PC-3 (cell line): ENCODE measurements at regions of chr13 and their contacts with region 1.

Region 1: DNA sequence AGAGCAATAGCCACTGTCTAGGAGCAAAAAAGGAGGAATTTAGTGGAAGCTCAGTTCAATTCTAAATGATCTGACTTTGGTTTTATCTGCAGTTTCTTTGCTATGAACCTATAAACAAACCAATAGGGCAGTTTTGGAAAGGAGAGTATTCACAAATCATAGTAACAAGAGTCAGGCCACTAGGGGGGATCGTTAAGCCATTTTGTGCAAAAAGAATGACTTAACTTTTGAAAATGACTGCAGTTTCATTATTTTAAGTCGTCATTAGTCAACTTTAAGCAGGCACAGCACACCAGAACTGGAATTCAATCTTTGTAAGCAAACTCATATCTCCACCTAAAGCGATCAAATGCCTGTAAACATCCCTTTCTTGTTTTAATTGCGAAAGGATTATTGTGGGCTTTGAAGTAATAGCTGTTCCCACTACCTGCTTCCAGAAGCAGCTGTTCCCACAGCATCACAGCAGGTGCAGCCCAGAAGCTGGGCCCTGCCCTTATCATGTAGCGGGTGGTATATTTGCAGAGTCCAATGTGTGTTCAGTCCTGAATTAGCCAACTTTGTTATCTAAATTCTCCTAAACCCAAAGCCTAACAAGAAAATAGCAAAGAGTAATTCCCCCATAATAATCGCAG is 51.5 kb downstream of the SOX21 start:
- DNase-seq: peak; percentile 51
- ATAC-seq: no peak
- H3K4me3 ChIP-seq: no peak overlapping the region
- H3K27ac ChIP-seq: no peak overlapping the region
- H3K4me1 ChIP-seq: peaks cover 34% of the 10 kb centered on the region
- H3K27me3 ChIP-seq: no peaks in the 10 kb centered on the region
- CTCF ChIP-seq: peak; percentile 65

Region 2: DNA sequence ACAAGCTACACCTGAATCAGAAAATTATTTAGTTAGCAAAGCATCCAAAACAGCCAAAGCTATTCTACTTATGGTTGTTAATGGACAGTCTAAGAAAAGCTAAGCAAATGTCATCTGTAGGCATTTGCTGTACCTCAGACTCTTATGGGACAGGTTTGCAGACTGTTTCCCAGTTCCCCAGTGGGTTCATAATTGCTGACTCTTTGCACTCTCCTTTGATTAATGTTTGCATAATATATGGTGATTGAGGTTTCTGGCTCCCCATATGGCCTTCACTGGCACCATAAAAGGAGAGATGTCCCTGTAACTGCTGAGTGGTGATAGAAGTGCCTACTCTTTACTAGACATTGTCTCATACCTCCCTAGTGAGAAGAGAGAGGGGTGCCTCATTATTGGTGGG is 1292.1 kb before region 1 on chr13:
- CTCF ChIA-PET with region 1: no interaction called
- POLR2A ChIA-PET with region 1: interaction called, 14 read pairs
- intact Hi-C with region 1: no loop called
- DNase-seq: no peak
- ATAC-seq: no peak
- H3K4me3 ChIP-seq: no peak overlapping the region
- H3K27ac ChIP-seq: no peak overlapping the region
- H3K4me1 ChIP-seq: no peaks in the 10 kb centered on the region
- H3K27me3 ChIP-seq: no peaks in the 10 kb centered on the region
- CTCF ChIP-seq: no peak

Region 3: DNA sequence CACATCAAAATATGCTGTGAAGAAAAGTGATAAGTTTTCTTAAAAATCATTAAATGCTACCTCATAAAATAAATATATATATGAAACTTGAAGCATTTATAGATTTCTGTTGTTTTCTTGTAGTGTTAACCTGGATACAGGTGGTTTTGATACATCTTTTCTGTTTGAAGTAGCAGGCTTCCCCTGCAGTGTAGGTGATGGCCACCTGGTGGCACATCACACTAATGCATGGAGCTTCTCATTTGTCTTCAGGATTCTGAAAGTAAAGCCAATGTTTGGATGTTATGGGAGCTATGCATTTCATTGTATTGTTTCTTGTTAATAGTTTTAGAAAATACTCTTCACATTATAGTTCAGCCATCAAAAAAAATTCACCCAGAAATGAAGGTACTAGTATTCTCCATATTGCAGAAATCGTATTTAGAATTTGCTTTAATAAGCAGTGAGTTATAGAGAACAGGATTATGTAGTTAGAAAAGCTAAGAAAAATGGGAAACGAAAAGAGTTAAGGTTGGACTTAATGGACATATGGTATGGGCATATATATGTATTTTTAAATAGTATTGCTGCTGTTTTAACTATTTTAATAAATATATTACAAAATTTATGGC is 40.4 kb before region 1 on chr13:
- CTCF ChIA-PET with region 1: interaction called, 4 read pairs
- POLR2A ChIA-PET with region 1: no interaction called
- intact Hi-C with region 1: loop called (anchors 1 kb)
- DNase-seq: peak; percentile 61
- ATAC-seq: peak; percentile 67
- H3K4me3 ChIP-seq: no peak overlapping the region
- H3K27ac ChIP-seq: no peak overlapping the region
- H3K4me1 ChIP-seq: no peaks in the 10 kb centered on the region
- H3K27me3 ChIP-seq: no peaks in the 10 kb centered on the region
- CTCF ChIP-seq: peak; percentile 83

Region 4: GRCh38 chr13:94641409-94641941 is 19.3 kb before region 1 on chr13:
- CTCF ChIA-PET with region 1: no interaction called
- POLR2A ChIA-PET with region 1: no interaction called
- intact Hi-C with region 1: loop called (anchors 1 kb)
- DNase-seq: peak; percentile 62
- ATAC-seq: peak; percentile 99
- H3K4me3 ChIP-seq: peak overlapping the region; percentile 14; the same call in 1 of the 2 replicates
- H3K27ac ChIP-seq: peak overlapping the region; percentile 64
- H3K4me1 ChIP-seq: peaks cover 20% of the 10 kb centered on the region
- H3K27me3 ChIP-seq: no peaks in the 10 kb centered on the region
- CTCF ChIP-seq: no peak

Region 5: GRCh38 chr13:94677799-94678198 is 17.0 kb after region 1 on chr13:
- CTCF ChIA-PET with region 1: no interaction called
- POLR2A ChIA-PET with region 1: no interaction called
- intact Hi-C with region 1: no loop called
- DNase-seq: no peak
- ATAC-seq: no peak
- H3K4me3 ChIP-seq: no peak overlapping the region
- H3K27ac ChIP-seq: no peak overlapping the region
- H3K4me1 ChIP-seq: peaks cover 10% of the 10 kb centered on the region
- H3K27me3 ChIP-seq: no peaks in the 10 kb centered on the region
- CTCF ChIP-seq: no peak

Region 6: DNA sequence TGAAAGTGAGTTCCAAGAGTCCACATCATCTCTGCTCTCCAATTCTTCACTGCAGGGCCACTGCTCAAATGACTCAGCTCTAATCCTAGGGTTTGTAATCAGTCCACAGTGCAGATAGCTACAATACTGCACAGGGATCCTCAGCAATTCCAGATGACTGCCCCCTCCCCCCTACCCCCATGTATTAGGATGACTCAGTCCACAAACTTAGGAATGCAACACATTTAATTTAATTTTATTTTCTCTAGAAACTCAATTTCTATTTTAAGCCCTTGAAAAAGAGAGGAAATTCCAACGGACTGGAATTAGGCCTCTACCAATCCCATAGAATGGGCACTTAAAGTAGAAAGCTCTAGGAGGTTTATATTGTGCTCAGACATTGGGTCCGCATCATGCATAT is 225.4 kb after region 1 on chr13:
- CTCF ChIA-PET with region 1: no interaction called
- POLR2A ChIA-PET with region 1: no interaction called
- intact Hi-C with region 1: no loop called
- DNase-seq: peak; percentile 9
- ATAC-seq: no peak
- H3K4me3 ChIP-seq: no peak overlapping the region
- H3K27ac ChIP-seq: no peak overlapping the region
- H3K4me1 ChIP-seq: no peaks in the 10 kb centered on the region
- H3K27me3 ChIP-seq: no peaks in the 10 kb centered on the region
- CTCF ChIP-seq: no peak

Region 7: DNA sequence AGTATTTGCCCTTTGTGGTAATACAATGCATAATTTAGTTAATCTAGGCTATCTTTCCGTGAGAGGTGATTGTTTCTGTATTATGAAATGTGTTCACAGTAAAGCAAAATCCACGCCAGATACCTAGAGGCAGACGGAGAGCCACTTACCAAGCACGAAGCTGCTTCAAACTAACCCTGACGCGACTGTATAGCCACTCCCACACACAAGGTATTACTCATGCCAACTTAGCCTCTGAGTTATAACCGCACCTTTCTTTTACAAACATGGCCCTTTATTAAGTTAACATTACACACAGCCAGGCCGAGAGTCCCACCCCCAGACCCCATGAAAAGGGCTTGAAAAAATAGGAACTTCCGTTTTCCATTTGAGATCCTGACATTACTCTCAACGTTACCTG is 454.7 kb after region 1 on chr13:
- CTCF ChIA-PET with region 1: no interaction called
- POLR2A ChIA-PET with region 1: interaction called, 15 read pairs
- intact Hi-C with region 1: no loop called
- DNase-seq: peak; percentile 93
- ATAC-seq: peak; percentile 91
- H3K4me3 ChIP-seq: peak overlapping the region; percentile 34
- H3K27ac ChIP-seq: peak overlapping the region; percentile 100
- H3K4me1 ChIP-seq: peaks cover 71% of the 10 kb centered on the region
- H3K27me3 ChIP-seq: no peaks in the 10 kb centered on the region
- CTCF ChIP-seq: no peak